Heart right ventricle (tissue), 16 donors: ENCODE measurements at regions of chrX and their contacts with region 1.

Region 1: GRCh38 chrX:104136241-104137019 is 20.4 kb downstream of the SLC25A53 start:
- DNase-seq: peak in 1 of 2 donors; percentile 76
- ATAC-seq: peak; percentile 83 to 95 (median 90)
- H3K4me3 ChIP-seq: peak overlapping the region in 8 of 10 donors; percentile 20 to 57 (median 48)
- H3K27ac ChIP-seq: peak overlapping the region in 1 of 10 donors; percentile 71
- H3K4me1 ChIP-seq: peaks cover 0 to 11% (median 0%) of the 10 kb centered on the region in 9 donors
- H3K27me3 ChIP-seq: peaks cover 0 to 25% (median 0%) of the 10 kb centered on the region in 7 donors
- CTCF ChIP-seq: peak; percentile 44 to 82 (median 71)

Region 2: DNA sequence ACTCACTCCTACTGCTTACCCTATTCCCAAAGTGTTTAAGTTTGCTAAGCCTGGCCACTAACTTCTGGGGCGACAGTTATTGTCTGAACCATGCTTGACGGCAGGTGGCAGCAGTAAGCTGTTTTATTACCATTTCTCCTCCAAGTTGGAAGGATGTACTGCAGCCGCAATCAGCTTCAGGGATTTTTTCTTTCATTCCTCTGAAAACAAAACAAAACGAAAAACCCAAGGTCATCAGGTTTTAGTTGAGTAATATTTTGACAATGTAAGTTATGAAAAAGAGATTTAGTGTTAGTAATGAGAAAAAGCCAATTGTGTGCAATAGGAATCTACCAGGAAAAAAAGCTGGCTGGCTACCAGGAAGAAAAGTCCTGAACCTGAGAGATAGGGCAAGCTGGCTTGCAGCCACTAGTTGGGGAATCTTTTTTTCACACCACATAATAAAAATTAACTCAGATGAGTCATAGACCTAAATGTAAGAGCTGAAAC is 291.2 kb before region 1 on chrX:
- intact Hi-C with region 1: loop called in 6 of 10 experiments (anchors 5 to 10 kb)
- DNase-seq: peak; percentile 34 to 37
- ATAC-seq: peak in 7 of 8 donors; percentile 56 to 80 (median 76)
- H3K4me3 ChIP-seq: no peak overlapping the region
- H3K27ac ChIP-seq: no peak overlapping the region
- H3K4me1 ChIP-seq: peaks cover 0 to 4% (median 0%) of the 10 kb centered on the region in 9 donors
- H3K27me3 ChIP-seq: peaks cover 0 to 36% (median 0%) of the 10 kb centered on the region in 7 donors
- CTCF ChIP-seq: peak in 8 of 9 donors; percentile 6 to 73 (median 64)

Region 3: GRCh38 chrX:104098151-104098808 is 38.1 kb before region 1 on chrX:
- intact Hi-C with region 1: loop called in 6 of 10 experiments (anchors 1 to 2 kb)
- DNase-seq: peak in 1 of 2 donors; percentile 56
- ATAC-seq: peak in 4 of 8 donors; percentile 42 to 70 (median 62)
- H3K4me3 ChIP-seq: no peak overlapping the region
- H3K27ac ChIP-seq: no peak overlapping the region
- H3K4me1 ChIP-seq: no peaks in the 10 kb centered on the region
- H3K27me3 ChIP-seq: peaks cover 0 to 71% (median 0%) of the 10 kb centered on the region in 7 donors
- CTCF ChIP-seq: peak; percentile 27 to 71 (median 64)

Region 4: DNA sequence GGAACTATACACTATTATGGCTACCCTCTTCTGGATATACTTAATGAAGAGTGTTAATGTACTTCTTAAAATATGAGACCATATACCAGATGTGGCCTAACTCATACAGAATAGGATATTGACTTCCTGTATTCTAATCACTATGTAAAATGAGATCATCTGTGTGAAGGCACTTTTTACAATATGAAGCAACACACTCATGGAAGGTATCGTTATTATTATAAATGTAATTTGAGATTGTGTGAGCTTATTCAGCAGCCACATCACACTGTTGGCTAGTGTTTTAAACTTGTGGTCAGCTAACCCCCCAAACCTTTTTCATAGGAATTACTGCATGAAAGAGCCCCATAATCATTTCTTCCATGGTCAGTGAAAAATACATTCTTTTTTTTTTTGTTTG is 1365.9 kb after region 1 on chrX:
- intact Hi-C with region 1: no loop called
- DNase-seq: no peak
- ATAC-seq: no peak
- H3K4me3 ChIP-seq: no peak overlapping the region
- H3K27ac ChIP-seq: no peak overlapping the region
- H3K4me1 ChIP-seq: no peaks in the 10 kb centered on the region
- H3K27me3 ChIP-seq: no peaks in the 10 kb centered on the region
- CTCF ChIP-seq: no peak